ENCODE measurements at regions of chr1 and their contacts with region 1.

Region 1: DNA sequence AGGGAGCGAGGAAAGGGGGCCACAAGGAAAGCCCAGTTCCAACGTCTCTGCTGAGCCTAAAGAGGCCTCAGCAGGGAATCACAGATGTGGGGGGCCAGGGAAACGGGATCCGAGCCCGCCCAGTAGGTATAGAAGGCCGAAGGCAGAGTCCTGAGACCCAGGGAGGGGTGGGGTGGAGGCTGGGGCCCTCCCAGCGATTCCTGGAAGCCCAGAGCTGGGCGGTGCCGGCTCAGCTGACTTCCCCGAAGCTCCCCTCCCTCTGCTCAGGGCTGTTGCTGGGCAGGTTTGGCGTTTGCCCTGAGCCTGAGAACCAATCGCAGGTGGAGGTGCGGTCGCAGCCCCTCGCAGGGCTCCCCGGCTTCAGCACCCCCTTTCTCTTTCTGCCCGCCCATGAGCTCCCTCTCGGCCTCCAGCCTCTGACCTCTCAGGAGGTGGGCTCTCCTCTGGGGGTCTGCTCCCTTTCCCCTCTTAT is 12.8 kb downstream of the ADAMTSL4 start:
- DNase-seq: peak; percentile 90
- ATAC-seq: peak; percentile 37
- H3K4me3 ChIP-seq: peak overlapping the region; percentile 63 to 89 (median 80)
- H3K4me3 Mint-ChIP-seq: peak overlapping the region; percentile 99
- H3K27ac ChIP-seq: peak overlapping the region; percentile 96 to 99
- H3K27ac Mint-ChIP-seq: peak overlapping the region; percentile 98
- H3K4me1 ChIP-seq: peaks cover 55 to 68% of the 10 kb centered on the region in 2 donors
- H3K4me1 Mint-ChIP-seq: peaks cover 59% of the 10 kb centered on the region
- H3K27me3 ChIP-seq: no peaks in the 10 kb centered on the region
- H3K27me3 Mint-ChIP-seq: no peaks in the 10 kb centered on the region
- CTCF ChIP-seq: no peak

Region 2: DNA sequence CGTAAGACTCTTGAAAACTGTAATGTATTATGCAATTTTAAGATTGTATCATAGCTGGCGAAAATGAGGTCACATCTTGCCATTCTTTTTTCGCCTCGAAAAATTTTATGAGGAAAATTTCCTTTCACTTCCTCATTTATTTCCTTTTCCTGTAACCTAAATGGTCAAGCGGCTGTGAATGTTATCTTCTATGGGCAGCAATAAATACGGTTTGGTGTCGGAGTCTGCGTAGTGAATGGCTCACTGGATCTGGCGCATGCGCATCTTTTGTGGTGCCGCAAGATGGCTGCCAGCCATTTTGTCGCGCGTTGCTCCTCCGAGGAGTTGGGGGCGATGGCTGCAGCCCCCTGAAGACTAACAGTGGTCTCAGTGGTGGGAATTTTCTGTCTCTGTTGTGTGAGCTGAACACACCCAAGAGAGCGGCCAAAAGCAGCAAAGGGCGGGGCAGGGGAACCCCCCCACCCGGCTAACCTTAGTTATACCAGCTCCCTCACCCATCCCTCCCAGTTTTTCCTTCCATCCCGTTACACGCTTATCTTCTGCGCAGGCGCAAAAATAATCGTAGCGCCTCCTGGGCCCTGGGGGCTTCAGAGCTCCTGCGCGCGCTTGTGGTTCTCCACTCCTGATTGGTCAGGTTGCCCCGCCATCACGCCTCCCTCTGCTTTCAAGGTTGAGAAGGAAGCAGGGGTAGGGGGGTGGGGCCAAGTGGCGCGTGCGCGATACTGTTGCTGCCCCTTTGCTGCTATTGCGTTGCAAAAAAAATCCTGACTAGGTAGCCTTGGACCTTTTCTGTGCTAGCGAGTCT is 198.4 kb before region 1 on chr1 and contains the start of gene RPRD2:
- CTCF ChIA-PET with region 1: no interaction called
- POLR2A ChIA-PET with region 1: interaction called, 3 read pairs
- intact Hi-C with region 1: loop called (anchors 1 kb)
- DNase-seq: peak; percentile 99
- ATAC-seq: peak; percentile 94
- H3K4me3 ChIP-seq: peak within 1 kb of the TSS; percentile 74 to 99 (median 90)
- H3K4me3 Mint-ChIP-seq: peak within 1 kb of the TSS; percentile 99
- H3K27ac ChIP-seq: peak within 1 kb of the TSS; percentile 87 to 90
- H3K27ac Mint-ChIP-seq: peak within 1 kb of the TSS; percentile 99
- H3K4me1 ChIP-seq: peaks cover 21 to 24% of the 10 kb centered on the region in 2 donors
- H3K4me1 Mint-ChIP-seq: peaks cover 31% of the 10 kb centered on the region
- H3K27me3 ChIP-seq: no peaks in the 10 kb centered on the region
- H3K27me3 Mint-ChIP-seq: no peaks in the 10 kb centered on the region
- CTCF ChIP-seq: no peak
- total RNA-seq, gene RPRD2: 49.1 and 51.4 TPM in 2 replicates

Region 3: GRCh38 chr1:150387200-150387599 is 174.8 kb before region 1 on chr1:
- CTCF ChIA-PET with region 1: no interaction called
- POLR2A ChIA-PET with region 1: no interaction called
- intact Hi-C with region 1: no loop called
- DNase-seq: no peak
- ATAC-seq: no peak
- H3K4me3 ChIP-seq: no peak overlapping the region
- H3K4me3 Mint-ChIP-seq: no peak overlapping the region
- H3K27ac ChIP-seq: no peak overlapping the region
- H3K27ac Mint-ChIP-seq: peak overlapping the region; percentile 53
- H3K4me1 ChIP-seq: peaks cover 0 to 3% of the 10 kb centered on the region in 2 donors
- H3K4me1 Mint-ChIP-seq: peaks cover 34% of the 10 kb centered on the region
- H3K27me3 ChIP-seq: no peaks in the 10 kb centered on the region
- H3K27me3 Mint-ChIP-seq: no peaks in the 10 kb centered on the region
- CTCF ChIP-seq: no peak

Region 4: DNA sequence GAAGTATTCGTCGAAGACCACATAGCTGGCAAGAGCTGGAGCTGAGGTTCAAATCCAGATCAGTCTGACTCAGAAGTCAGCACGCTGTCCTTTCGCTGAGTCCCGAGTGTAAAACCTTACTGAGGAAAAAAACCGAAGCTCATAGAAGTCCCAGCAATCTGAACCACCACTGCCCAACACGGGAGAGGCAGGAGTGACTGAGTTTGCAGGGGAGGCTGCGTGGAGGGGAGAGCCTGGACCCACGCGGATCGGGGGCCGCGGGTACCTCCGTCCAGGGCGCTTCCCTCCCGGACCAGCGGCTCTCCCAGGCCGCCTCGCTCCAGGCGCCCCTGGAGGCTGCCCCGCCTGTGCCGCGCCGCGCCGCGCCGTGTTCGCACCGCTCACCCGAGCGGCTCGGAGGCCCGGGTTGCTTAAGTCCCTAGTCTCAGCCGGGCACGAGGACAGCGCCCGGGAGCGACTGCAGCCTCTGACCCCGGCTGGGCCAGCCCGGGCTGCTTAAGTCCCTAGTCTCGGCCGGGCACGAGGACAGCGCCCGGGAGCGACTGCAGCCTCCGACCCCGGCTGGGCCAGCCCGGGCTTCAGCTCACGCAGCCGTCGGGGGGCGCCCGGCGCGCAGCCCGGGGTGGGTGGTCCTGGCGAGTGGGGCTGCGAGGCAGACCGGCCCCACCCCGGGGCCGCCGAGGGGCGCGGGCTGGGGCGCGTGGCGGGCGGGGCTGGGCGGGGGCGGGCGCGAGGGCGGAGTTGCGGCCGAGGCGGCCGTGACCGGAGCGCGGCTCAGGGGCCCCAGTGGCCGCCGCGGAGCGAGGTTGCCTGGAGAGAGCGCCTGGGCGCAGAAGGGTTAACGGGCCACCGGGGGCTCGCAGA is 13.1 kb before region 1 on chr1 and contains the start of gene ADAMTSL4:
- CTCF ChIA-PET with region 1: interaction called, 11 read pairs
- POLR2A ChIA-PET with region 1: interaction called, 4 read pairs
- intact Hi-C with region 1: no loop called
- DNase-seq: peak; percentile 67
- ATAC-seq: peak; percentile 72
- H3K4me3 ChIP-seq: peak within 1 kb of the TSS; percentile 32 to 66 (median 60)
- H3K4me3 Mint-ChIP-seq: peak within 1 kb of the TSS; percentile 85
- H3K27ac ChIP-seq: no peak within 1 kb of the TSS
- H3K27ac Mint-ChIP-seq: no peak within 1 kb of the TSS
- H3K4me1 ChIP-seq: peaks cover 18 to 28% of the 10 kb centered on the region in 2 donors
- H3K4me1 Mint-ChIP-seq: peaks cover 28% of the 10 kb centered on the region
- H3K27me3 ChIP-seq: peaks cover 0 to 38% (median 9%) of the 10 kb centered on the region in 4 experiments
- H3K27me3 Mint-ChIP-seq: peaks cover 12% of the 10 kb centered on the region
- CTCF ChIP-seq: peak; percentile 9
- total RNA-seq, gene ADAMTSL4: 0.34 TPM in 1 of 2 replicates, not detected in the other

Region 5: GRCh38 chr1:150606463-150607148 is 44.6 kb after region 1 on chr1:
- CTCF ChIA-PET with region 1: interaction called, 661 read pairs
- POLR2A ChIA-PET with region 1: interaction called, 22 read pairs
- intact Hi-C with region 1: loop called (anchors 1 kb)
- DNase-seq: no peak
- ATAC-seq: no peak
- H3K4me3 ChIP-seq: no peak overlapping the region
- H3K4me3 Mint-ChIP-seq: no peak overlapping the region
- H3K27ac ChIP-seq: no peak overlapping the region
- H3K27ac Mint-ChIP-seq: no peak overlapping the region
- H3K4me1 ChIP-seq: peaks cover 10 to 13% of the 10 kb centered on the region in 2 donors
- H3K4me1 Mint-ChIP-seq: peaks cover 9% of the 10 kb centered on the region
- H3K27me3 ChIP-seq: no peaks in the 10 kb centered on the region
- H3K27me3 Mint-ChIP-seq: no peaks in the 10 kb centered on the region
- CTCF ChIP-seq: no peak

Region 6: GRCh38 chr1:150629115-150629928 is 67.3 kb after region 1 on chr1 and contains the start of gene ENSA:
- CTCF ChIA-PET with region 1: interaction called, 661 read pairs
- POLR2A ChIA-PET with region 1: interaction called, 35 read pairs
- intact Hi-C with region 1: loop called (anchors 1 kb)
- DNase-seq: peak; percentile 99
- ATAC-seq: peak; percentile 85
- H3K4me3 ChIP-seq: peak within 1 kb of the TSS; percentile 74 to 93 (median 80)
- H3K4me3 Mint-ChIP-seq: no peak within 1 kb of the TSS
- H3K27ac ChIP-seq: peak within 1 kb of the TSS; percentile 95 to 96
- H3K27ac Mint-ChIP-seq: no peak within 1 kb of the TSS
- H3K4me1 ChIP-seq: peaks cover 19 to 21% of the 10 kb centered on the region in 2 donors
- H3K4me1 Mint-ChIP-seq: peaks cover 18% of the 10 kb centered on the region
- H3K27me3 ChIP-seq: no peaks in the 10 kb centered on the region
- H3K27me3 Mint-ChIP-seq: no peaks in the 10 kb centered on the region
- CTCF ChIP-seq: no peak
- total RNA-seq, gene ENSA: 115 and 119 TPM in 2 replicates

Region 7: GRCh38 chr1:150876119-150876454 is 314.1 kb after region 1 on chr1:
- CTCF ChIA-PET with region 1: no interaction called
- POLR2A ChIA-PET with region 1: no interaction called
- intact Hi-C with region 1: loop called (anchors 5 kb)
- DNase-seq: no peak
- ATAC-seq: no peak
- H3K4me3 ChIP-seq: peak overlapping the region; percentile 72 to 87 (median 84)
- H3K4me3 Mint-ChIP-seq: peak overlapping the region; percentile 88
- H3K27ac ChIP-seq: peak overlapping the region; percentile 64 to 80
- H3K27ac Mint-ChIP-seq: peak overlapping the region; percentile 90
- H3K4me1 ChIP-seq: peaks cover 20% of the 10 kb centered on the region in 2 donors
- H3K4me1 Mint-ChIP-seq: peaks cover 32% of the 10 kb centered on the region
- H3K27me3 ChIP-seq: no peaks in the 10 kb centered on the region
- H3K27me3 Mint-ChIP-seq: no peaks in the 10 kb centered on the region
- CTCF ChIP-seq: no peak

Region 8: DNA sequence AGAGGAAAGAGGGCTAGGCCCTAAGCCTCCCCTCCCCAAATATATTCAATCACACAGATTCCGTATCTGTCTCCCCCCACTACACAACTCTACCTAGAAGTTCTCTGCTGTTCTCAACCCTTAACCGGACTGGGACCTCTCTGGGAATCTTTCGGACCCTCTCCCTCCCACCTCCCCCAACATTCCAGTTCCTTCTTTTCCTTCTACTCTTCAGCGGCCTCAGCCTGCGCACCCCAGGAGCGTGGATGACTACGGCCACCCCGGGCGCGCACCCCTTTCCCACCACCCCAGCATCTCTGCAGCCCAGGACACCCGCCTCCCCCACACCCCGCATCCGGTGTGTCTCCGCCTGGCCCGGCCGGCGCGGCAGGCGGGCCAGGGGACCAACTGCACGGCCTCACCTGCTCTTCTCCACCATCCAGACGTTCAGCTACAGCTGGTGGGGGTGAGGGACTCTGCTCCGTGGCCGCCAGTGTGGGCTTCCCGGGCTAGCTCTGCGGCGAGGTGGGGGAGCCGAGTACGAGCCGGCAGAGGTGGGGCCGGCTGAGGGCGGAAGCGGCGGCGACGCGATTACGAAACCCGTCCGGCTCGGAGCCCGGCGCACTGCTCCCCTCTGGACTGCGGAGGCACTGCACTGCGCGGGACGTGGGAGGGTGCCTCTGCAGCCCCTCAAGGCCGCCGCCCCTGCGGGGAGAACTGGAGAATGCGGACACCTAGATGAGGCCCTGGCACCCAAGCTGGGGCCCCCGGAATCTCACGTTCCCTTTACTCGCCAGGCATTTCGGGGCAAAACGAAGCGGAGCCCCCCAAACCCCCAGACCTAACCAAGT is 497.3 kb after region 1 on chr1 and contains the start of gene CDC42SE1:
- CTCF ChIA-PET with region 1: no interaction called
- POLR2A ChIA-PET with region 1: no interaction called
- intact Hi-C with region 1: loop called (anchors 2 kb)
- DNase-seq: peak; percentile 92
- ATAC-seq: peak; percentile 85
- H3K4me3 ChIP-seq: peak within 1 kb of the TSS; percentile 87 to 99 (median 97)
- H3K4me3 Mint-ChIP-seq: peak within 1 kb of the TSS; percentile 99
- H3K27ac ChIP-seq: peak within 1 kb of the TSS; percentile 76 to 95
- H3K27ac Mint-ChIP-seq: peak within 1 kb of the TSS; percentile 94
- H3K4me1 ChIP-seq: peaks cover 42 to 46% of the 10 kb centered on the region in 2 donors
- H3K4me1 Mint-ChIP-seq: peaks cover 51% of the 10 kb centered on the region
- H3K27me3 ChIP-seq: no peaks in the 10 kb centered on the region
- H3K27me3 Mint-ChIP-seq: no peaks in the 10 kb centered on the region
- CTCF ChIP-seq: peak; percentile 85
- total RNA-seq, gene CDC42SE1: 230 and 238 TPM in 2 replicates